Adrenal gland (tissue), 19 donors: ENCODE measurements at regions of chr1 and their contacts with region 1.

Region 1: GRCh38 chr1:205919026-205919746 is 24.1 kb downstream of the SLC26A9 start:
- DNase-seq: peak; percentile 73 to 95 (median 86)
- H3K4me3 ChIP-seq: no peak overlapping the region
- H3K27ac ChIP-seq: no peak overlapping the region
- H3K4me1 ChIP-seq: no peaks in the 10 kb centered on the region
- H3K27me3 ChIP-seq: no peaks in the 10 kb centered on the region
- CTCF ChIP-seq: peak; percentile 80 to 97 (median 94)
- POLR2A ChIP-seq: no peak

Region 2: GRCh38 chr1:205791568-205792180 is 127.5 kb before region 1 on chr1:
- intact Hi-C with region 1: loop called in 1 of 2 experiments (anchors 10 kb)
- DNase-seq: peak; percentile 60 to 88 (median 68)
- H3K4me3 ChIP-seq: no peak overlapping the region
- H3K27ac ChIP-seq: no peak overlapping the region
- H3K4me1 ChIP-seq: no peaks in the 10 kb centered on the region
- H3K27me3 ChIP-seq: no peaks in the 10 kb centered on the region
- CTCF ChIP-seq: peak; percentile 54 to 86 (median 76)
- POLR2A ChIP-seq: no peak

Region 3: GRCh38 chr1:205878026-205878425 is 41.2 kb before region 1 on chr1:
- intact Hi-C with region 1: no loop called
- DNase-seq: no peak
- H3K4me3 ChIP-seq: no peak overlapping the region
- H3K27ac ChIP-seq: no peak overlapping the region
- H3K4me1 ChIP-seq: no peaks in the 10 kb centered on the region
- H3K27me3 ChIP-seq: no peaks in the 10 kb centered on the region
- CTCF ChIP-seq: no peak
- POLR2A ChIP-seq: no peak

Region 4: GRCh38 chr1:205977402-205978014 is 58.3 kb after region 1 on chr1:
- intact Hi-C with region 1: loop called (anchors 2 kb)
- DNase-seq: peak; percentile 67 to 84 (median 77)
- H3K4me3 ChIP-seq: no peak overlapping the region
- H3K27ac ChIP-seq: no peak overlapping the region
- H3K4me1 ChIP-seq: no peaks in the 10 kb centered on the region
- H3K27me3 ChIP-seq: no peaks in the 10 kb centered on the region
- CTCF ChIP-seq: peak; percentile 94 to 97 (median 96)
- POLR2A ChIP-seq: no peak

Region 5: GRCh38 chr1:206106328-206107167 is 187.4 kb after region 1 on chr1:
- intact Hi-C with region 1: loop called (anchors 5 to 10 kb)
- DNase-seq: peak; percentile 77 to 91 (median 83)
- H3K4me3 ChIP-seq: no peak overlapping the region
- H3K27ac ChIP-seq: no peak overlapping the region
- H3K4me1 ChIP-seq: no peaks in the 10 kb centered on the region
- H3K27me3 ChIP-seq: peaks cover 5% of the 10 kb centered on the region
- CTCF ChIP-seq: peak; percentile 79 to 90 (median 83)
- POLR2A ChIP-seq: no peak

Region 6: DNA sequence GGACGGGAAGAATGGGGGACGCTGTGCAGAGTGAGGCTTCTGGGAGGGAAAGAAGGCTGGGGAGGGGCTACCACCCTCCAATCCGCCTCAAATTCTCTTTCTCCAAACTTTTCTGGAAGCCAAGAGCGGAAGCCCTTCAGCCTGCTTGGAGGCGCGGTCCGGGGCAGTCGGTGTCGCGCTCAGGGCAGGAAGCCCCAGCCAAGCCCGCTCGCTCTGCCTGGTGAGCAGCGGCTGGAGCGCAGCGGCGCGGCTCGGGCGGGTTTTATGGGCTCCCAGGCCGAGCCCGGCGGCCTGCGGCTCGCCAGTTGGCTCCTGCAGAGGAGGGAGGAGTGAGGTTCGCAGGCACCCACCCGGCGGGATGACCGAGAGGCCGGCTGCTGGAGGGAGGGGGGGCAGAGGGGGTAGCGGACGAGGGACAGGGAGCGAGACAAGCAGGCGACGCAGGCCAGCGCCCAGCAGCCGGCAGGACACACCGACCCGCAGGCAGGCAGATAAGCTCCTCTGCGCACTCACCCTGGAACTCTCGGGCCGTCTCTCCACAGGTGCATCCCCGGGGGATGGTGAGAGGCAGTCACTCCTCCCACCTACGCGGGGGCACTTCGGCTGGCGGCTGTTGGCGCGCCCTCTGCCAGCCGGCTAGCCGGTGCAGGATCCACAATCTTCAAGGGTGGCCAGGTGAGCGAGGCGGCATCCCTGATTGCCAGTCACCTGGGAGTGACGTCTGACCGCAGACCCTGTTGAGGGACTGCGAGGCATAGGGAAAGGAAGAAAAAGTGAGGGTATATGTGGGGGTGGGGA is 198.2 kb after region 1 on chr1 and contains the start of gene AVPR1B:
- intact Hi-C with region 1: loop called in 1 of 2 experiments (anchors 10 kb)
- DNase-seq: peak in 4 of 7 donors; percentile 25 to 48 (median 44)
- H3K4me3 ChIP-seq: peak within 1 kb of the TSS in 2 of 4 donors; percentile 1 to 48
- H3K27ac ChIP-seq: no peak within 1 kb of the TSS
- H3K4me1 ChIP-seq: peaks cover 0 to 10% of the 10 kb centered on the region in 2 donors
- H3K27me3 ChIP-seq: peaks cover 6% of the 10 kb centered on the region
- CTCF ChIP-seq: no peak
- POLR2A ChIP-seq: no peak
- total RNA-seq, gene AVPR1B: not detected